Ascending aorta (tissue), 2 donors: ENCODE measurements at regions of chr1 and their contacts with region 1.

Region 1: GRCh38 chr1:53196485-53197270 is at the start of gene CPT2:
- DNase-seq: peak; percentile 71 to 98
- H3K4me3 ChIP-seq: peak within 1 kb of the TSS; percentile 89 to 100
- H3K27ac ChIP-seq: peak within 1 kb of the TSS; percentile 99 to 100
- H3K4me1 ChIP-seq: peaks cover 0 to 18% of the 10 kb centered on the region in 2 donors
- H3K27me3 ChIP-seq: no peaks in the 10 kb centered on the region
- CTCF ChIP-seq: peak in 1 of 3 experiments; percentile 14
- total RNA-seq, gene CPT2: 24.8 TPM

Region 2: DNA sequence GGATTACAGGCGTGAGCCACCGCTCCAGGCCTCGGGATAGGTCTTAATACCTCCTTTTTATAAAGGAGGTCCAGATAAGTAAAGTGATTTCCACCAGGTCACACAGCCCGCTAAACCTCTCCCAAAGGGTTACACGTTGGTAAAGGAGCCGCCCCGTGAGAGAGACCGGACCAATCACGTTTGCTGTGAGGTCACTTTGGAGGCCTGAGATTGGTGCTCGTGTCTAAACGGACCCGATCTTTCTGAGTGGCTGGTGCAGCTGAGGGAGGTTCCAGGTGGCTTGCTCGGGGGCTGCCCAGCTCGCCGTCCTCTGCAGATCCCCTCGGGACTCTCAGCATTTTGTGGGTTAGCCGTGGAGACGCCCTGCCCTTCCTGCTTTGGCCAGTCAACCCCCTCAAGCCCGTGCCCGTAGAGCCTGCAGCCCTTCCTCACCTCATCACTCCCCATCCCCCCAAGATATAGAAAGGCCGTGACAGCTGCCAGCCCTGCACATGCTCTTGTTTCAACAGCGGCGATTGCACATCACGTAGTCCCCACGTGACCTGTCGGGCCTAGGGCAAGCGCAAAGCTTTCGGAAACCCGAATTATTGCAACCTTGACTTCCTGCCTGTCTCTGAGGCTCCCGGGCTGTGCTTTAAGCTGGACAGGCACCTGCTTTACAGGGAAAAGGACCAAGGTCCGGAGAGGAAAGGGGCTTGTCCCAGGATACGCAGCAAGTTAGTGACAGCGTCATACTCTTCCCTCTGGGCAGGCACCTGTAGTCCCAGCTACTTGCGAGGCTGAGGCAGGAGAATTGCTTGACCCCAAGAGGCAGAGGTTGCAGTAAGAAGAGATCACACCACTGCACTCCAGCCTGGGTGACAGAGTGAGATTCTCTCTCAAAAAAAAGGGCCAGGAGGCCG is 493.5 kb before region 1 on chr1:
- intact Hi-C with region 1: loop called (anchors 10 kb)
- DNase-seq: peak; percentile 85 to 95
- H3K4me3 ChIP-seq: peak overlapping the region; percentile 59
- H3K27ac ChIP-seq: peak overlapping the region; percentile 70 to 74
- H3K4me1 ChIP-seq: peaks cover 0 to 3% of the 10 kb centered on the region in 2 donors
- H3K27me3 ChIP-seq: no peaks in the 10 kb centered on the region
- CTCF ChIP-seq: no peak

Region 3: GRCh38 chr1:52927212-52928014 is 269.3 kb before region 1 on chr1 and contains the start of gene SCP2:
- intact Hi-C with region 1: loop called (anchors 5 kb)
- DNase-seq: peak; percentile 33 to 91
- H3K4me3 ChIP-seq: peak within 1 kb of the TSS; percentile 50 to 73
- H3K27ac ChIP-seq: peak within 1 kb of the TSS; percentile 72 to 75
- H3K4me1 ChIP-seq: peaks cover 0 to 8% of the 10 kb centered on the region in 2 donors
- H3K27me3 ChIP-seq: no peaks in the 10 kb centered on the region
- CTCF ChIP-seq: no peak
- total RNA-seq, gene SCP2: 26.3 TPM

Region 4: DNA sequence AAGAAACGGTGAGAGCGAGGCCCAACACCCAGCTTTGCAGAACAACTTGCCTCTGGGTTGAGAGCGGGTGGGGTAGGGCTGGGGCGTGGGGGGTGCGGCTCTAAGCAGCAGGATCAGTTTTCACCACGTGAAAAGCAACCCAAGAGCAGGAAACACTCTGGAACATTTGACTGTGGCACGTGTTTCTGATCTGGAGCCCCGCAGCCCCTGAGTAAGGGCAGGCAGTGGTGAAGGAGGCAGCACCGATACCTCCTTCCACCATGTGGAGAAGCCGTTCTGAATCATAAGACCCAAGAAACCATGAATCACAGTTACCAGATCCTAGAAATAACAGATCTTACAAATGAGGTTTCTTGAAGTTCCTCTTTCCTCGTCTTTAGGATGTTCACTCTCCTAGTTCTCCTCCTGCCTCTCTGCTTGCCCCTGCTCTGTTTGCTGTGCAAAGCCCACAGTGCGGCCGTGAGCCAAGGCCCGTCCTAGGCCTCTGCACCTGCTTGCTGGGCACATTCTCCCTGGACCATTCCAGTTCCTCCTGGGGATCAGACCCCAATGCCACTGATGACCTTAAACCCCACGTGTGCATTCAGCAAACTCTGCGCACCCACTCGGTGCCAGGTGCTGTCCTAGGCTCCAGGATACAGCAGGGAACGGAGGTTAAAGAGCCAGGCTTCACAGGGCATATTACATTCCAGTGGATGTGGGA is 86.2 kb before region 1 on chr1:
- intact Hi-C with region 1: no loop called
- DNase-seq: no peak
- H3K4me3 ChIP-seq: no peak overlapping the region
- H3K27ac ChIP-seq: peak overlapping the region in 1 of 2 donors; percentile 35
- H3K4me1 ChIP-seq: peaks cover 4 to 19% of the 10 kb centered on the region in 2 donors
- H3K27me3 ChIP-seq: no peaks in the 10 kb centered on the region
- CTCF ChIP-seq: no peak

Region 5: DNA sequence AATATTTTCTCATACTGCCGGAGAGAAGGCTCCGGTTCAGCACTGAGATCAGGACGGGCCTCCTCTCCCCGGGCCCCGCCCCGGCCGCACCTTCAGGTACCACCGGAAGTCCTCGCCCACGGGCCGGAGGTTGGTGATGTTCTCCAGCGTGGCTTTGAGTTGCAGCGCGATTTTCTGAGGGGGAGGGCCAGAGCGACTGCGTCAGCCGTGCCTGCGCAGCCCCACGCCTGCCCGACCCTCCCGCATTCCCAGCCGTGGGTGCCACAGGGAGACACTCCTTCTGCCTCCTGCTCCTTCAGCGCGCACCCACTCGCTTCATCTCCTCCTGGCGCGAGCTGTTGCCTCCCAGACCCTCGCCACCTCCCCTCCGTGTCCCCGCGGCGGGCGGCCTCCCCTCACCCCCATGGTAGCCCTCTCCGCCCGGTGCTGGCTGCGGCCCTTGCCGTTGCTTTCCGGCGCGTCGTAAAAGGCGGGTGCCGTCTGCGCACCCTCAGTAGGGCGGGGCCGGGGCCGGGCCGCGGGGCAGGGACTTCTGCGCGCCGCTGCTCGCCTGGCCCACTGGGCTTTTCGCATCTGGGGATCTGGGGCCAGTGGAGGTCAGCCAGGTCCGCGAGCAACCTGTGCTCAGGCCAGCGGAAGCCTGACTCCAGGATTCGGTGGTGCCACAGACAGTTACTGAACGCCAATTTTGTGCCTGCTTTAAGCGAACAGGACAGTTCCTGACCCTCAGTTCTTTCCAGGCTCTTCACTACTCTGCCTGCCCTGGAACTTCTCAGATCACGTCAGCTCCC is 23.7 kb after region 1 on chr1 and contains the start of gene CZIB:
- intact Hi-C with region 1: loop called (anchors 1 kb)
- DNase-seq: peak; percentile 65 to 96
- H3K4me3 ChIP-seq: peak within 1 kb of the TSS; percentile 72 to 88
- H3K27ac ChIP-seq: peak within 1 kb of the TSS; percentile 91 to 98
- H3K4me1 ChIP-seq: peaks cover 3 to 12% of the 10 kb centered on the region in 2 donors
- H3K27me3 ChIP-seq: no peaks in the 10 kb centered on the region
- CTCF ChIP-seq: no peak
- total RNA-seq, gene CZIB: 28.9 TPM

Region 6: GRCh38 chr1:53238197-53239155 is 41.8 kb after region 1 on chr1 and contains the start of gene MAGOH:
- intact Hi-C with region 1: loop called (anchors 1 kb)
- DNase-seq: peak; percentile 72 to 97
- H3K4me3 ChIP-seq: peak within 1 kb of the TSS; percentile 76 to 91
- H3K27ac ChIP-seq: peak within 1 kb of the TSS; percentile 65 to 71
- H3K4me1 ChIP-seq: peaks cover 5 to 18% of the 10 kb centered on the region in 2 donors
- H3K27me3 ChIP-seq: no peaks in the 10 kb centered on the region
- CTCF ChIP-seq: no peak
- total RNA-seq, gene MAGOH: 10.9 TPM